ENCODE measurements at regions of chr9 and their contacts with region 1.

Region 1: GRCh38 chr9:98168941-98169488 is 23.4 kb downstream of the CORO2A start:
- DNase-seq: peak; percentile 70
- H3K4me3 ChIP-seq: no peak overlapping the region
- H3K27ac ChIP-seq: no peak overlapping the region
- H3K4me1 ChIP-seq: peaks cover 23% of the 10 kb centered on the region
- H3K27me3 ChIP-seq: no peaks in the 10 kb centered on the region
- CTCF ChIP-seq: no peak

Region 2: DNA sequence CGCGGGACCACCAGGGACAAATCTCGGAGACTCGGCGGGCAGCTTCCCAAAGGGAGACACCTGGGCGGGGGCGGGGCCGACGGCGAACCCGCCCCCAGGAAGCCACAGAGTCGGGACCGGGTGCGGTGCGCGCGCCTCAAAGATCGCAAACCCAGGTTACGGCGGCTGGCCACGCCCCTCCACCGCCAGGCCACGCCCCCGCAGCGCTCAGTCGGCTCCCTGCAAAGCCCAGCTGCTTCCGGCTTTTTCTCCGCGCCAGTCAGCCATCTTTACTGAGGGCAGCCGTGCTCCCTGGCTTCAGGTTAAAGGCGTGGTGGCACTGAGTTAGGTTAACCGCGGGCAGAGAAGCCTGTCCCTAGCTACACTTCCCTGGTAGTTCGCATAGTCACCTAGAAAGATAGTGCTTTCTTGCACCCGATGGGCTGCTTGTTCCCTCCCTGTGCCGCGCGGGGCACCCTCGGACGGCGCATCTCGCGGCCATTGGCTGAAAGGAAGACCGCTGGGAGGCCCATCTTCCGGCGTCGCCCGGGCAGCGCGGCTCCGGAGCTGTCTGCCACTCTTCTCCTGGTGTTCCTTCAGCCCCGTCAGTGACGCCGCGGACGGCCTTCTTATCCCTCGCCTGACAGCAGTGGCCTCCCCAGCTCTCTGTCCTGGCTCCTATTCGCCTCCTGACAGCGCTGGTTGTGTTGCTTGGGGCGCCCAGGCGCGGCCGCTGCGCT is 86.7 kb after region 1 on chr9 and contains the start of gene TBC1D2:
- CTCF ChIA-PET with region 1: no interaction called
- dilution Hi-C with region 1: loop called (anchors 5 kb)
- in situ Hi-C with region 1: loop called in 1 of 2 experiments (anchors 25 kb)
- intact Hi-C with region 1: no loop called
- DNase-seq: peak; percentile 94
- H3K4me3 ChIP-seq: peak within 1 kb of the TSS; percentile 69 to 97 (median 93)
- H3K27ac ChIP-seq: peak within 1 kb of the TSS; percentile 72
- H3K4me1 ChIP-seq: peaks cover 39% of the 10 kb centered on the region
- H3K27me3 ChIP-seq: no peaks in the 10 kb centered on the region
- CTCF ChIP-seq: peak in 1 of 2 donors; percentile 35
- total RNA-seq, gene TBC1D2: 86.7 to 98.2 TPM

Region 3: GRCh38 chr9:98263482-98264357 is 94.7 kb after region 1 on chr9:
- CTCF ChIA-PET with region 1: no interaction called
- dilution Hi-C with region 1: loop called (anchors 5 kb)
- in situ Hi-C with region 1: loop called in 1 of 2 experiments (anchors 25 kb)
- intact Hi-C with region 1: no loop called
- DNase-seq: peak; percentile 51
- H3K4me3 ChIP-seq: no peak overlapping the region
- H3K27ac ChIP-seq: no peak overlapping the region
- H3K4me1 ChIP-seq: no peaks in the 10 kb centered on the region
- H3K27me3 ChIP-seq: peaks cover 2% of the 10 kb centered on the region
- CTCF ChIP-seq: peak; percentile 98